ENCODE measurements at regions of chr6 and their contacts with region 1.

Region 1: GRCh38 chr6:100464903-100465700 is at the start of gene SIM1:
- DNase-seq: peak; percentile 66
- CTCF ChIP-seq: no peak

Region 2: GRCh38 chr6:99613409-99613704 is 851.7 kb before region 1 on chr6:
- in situ Hi-C with region 1: loop called (anchors 25 kb)
- DNase-seq: peak; percentile 81
- CTCF ChIP-seq: peak; percentile 77